Cardiac septum (tissue), 1 donor: ENCODE measurements at regions of chr1 and their contacts with region 1.

Region 1: DNA sequence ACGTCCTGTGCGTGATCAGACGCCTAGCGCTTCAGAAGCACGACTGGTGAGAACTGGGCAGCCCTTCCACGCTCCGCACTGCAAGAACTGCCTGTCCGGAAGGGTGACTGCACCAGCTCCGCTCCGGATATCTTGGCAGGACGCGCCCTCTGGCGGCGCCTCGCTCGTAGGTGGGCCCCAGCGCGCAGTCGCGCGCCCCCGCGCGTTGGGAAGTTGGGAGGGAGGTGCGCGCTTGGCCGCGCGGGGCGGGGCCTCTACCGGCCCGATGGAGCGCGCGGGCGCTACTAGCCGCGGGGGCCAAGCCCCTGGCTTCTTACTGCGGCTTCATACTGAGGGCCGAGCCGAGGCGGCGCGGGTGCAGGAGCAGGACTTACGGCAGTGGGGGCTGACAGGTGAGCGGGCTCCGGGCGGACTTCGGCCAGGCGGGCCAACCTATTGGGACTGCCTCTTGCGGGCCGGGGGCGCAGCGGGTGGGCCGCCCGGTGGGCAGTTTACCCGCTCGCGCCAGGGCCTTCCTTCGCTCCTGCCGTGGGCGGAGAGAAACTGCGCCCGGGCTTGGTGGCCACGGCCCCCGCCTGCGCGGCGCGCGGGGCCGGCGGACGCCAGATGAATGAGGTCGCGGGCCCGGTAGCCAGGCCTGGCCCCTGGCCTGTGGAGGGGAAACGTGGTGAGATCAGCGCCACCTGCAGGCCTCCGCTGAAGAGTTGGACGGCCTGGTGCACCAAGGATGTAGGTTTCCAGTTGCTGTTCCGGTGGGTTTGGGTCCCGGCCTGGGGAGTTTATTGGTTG is at the start of gene CHD1L:
- DNase-seq: peak; percentile 99
- total RNA-seq, gene CHD1L: 13.0 TPM

Region 2: GRCh38 chr1:147072370-147073061 is 170.1 kb before region 1 on chr1:
- intact Hi-C with region 1: no loop called
- DNase-seq: no peak

Region 3: GRCh38 chr1:147172168-147172992 is 70.3 kb before region 1 on chr1 and contains the start of gene PRKAB2:
- intact Hi-C with region 1: loop called (anchors 1 kb)
- DNase-seq: peak; percentile 97
- total RNA-seq, gene PRKAB2: 27.9 TPM

Region 4: GRCh38 chr1:147313250-147313649 is 70.6 kb after region 1 on chr1:
- intact Hi-C with region 1: no loop called
- DNase-seq: no peak